Activated naive CD4-positive, alpha-beta T cell treated with anti-CD3 and anti-CD28 coated beads for 36 hours (primary cell): ENCODE measurements at regions of chr18 and their contacts with region 1.

Region 1: DNA sequence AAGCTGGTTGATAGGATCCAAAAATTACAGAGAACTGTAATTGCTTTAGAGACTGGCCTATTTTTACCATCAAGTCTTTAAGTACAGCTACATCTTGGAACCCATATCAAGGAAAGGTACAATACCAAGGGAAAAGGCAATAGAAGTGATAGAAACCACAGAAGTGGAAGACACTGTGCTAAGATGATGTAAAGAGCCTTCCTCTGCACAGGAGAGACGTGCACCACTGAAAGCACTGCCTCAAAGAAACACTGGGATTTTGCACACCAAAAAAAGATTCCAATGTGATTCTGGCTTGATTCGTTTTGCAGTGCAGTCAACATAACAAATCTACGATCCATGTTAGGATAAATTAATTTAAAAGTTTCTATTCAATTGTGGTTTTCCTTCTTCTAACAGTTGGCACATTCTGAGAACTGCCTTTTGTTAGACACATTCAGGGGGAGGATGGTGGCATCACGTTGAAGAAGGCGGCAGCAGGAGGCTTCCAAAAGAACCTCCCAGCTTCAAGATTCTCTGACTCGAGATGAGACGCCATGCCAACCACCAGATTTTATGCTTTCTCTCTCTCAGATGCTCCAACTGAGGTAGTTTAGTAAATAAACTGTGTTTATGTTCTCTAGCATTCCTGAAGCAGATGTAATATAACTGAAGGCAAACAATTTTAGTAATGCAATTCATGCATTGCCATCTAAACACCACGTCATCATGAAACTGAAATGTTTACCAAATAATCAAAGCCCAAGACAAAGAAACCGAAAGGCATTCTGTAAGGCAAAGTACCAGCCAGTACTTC is 102.9 kb downstream of the BCL2 start:
- DNase-seq: peak; percentile 48
- H3K4me3 Mint-ChIP-seq: peak overlapping the region; percentile 64
- H3K27ac Mint-ChIP-seq: peak overlapping the region; percentile 94
- H3K4me1 Mint-ChIP-seq: peaks cover 89% of the 10 kb centered on the region
- H3K27me3 Mint-ChIP-seq: no peaks in the 10 kb centered on the region

Region 2: GRCh38 chr18:63040788-63041410 is 175.8 kb before region 1 on chr18:
- CTCF ChIA-PET with region 1: no interaction called
- intact Hi-C with region 1: loop called (anchors 5 kb)
- DNase-seq: peak; percentile 53
- H3K4me3 Mint-ChIP-seq: peak overlapping the region; percentile 1
- H3K27ac Mint-ChIP-seq: peak overlapping the region; percentile 51
- H3K4me1 Mint-ChIP-seq: peaks cover 25% of the 10 kb centered on the region
- H3K27me3 Mint-ChIP-seq: no peaks in the 10 kb centered on the region

Region 3: DNA sequence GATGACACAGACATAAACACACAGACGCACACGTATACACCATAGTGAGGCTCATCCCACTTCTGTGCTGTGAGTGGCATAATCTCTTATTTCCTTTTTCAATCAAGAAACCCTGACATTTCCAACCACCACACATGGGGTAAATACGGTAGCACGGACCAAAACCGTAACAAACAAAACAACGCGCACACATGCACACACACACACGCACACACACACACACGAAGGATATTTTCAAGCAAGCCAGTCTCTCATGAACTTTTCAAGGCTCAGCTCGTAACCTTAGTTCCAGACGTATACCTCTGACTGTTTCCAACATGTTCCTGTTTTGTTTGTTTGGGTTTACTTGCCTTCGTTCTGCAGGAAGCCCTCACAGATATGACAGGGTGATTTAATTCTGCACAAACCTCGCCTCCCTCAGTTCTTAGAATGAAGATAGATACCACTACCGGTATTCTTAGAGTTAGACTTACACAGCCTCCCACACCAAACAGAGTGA is 16.9 kb before region 1 on chr18:
- CTCF ChIA-PET with region 1: interaction called, 3 read pairs
- intact Hi-C with region 1: loop called (anchors 1 kb)
- DNase-seq: peak; percentile 54
- H3K4me3 Mint-ChIP-seq: no peak overlapping the region
- H3K27ac Mint-ChIP-seq: no peak overlapping the region
- H3K4me1 Mint-ChIP-seq: peaks cover 30% of the 10 kb centered on the region
- H3K27me3 Mint-ChIP-seq: no peaks in the 10 kb centered on the region

Region 4: GRCh38 chr18:63299837-63300745 is 83.4 kb after region 1 on chr18:
- CTCF ChIA-PET with region 1: no interaction called
- intact Hi-C with region 1: loop called (anchors 1 kb)
- DNase-seq: peak; percentile 72
- H3K4me3 Mint-ChIP-seq: peak overlapping the region; percentile 17
- H3K27ac Mint-ChIP-seq: peak overlapping the region; percentile 86
- H3K4me1 Mint-ChIP-seq: peaks cover 73% of the 10 kb centered on the region
- H3K27me3 Mint-ChIP-seq: no peaks in the 10 kb centered on the region

Region 5: DNA sequence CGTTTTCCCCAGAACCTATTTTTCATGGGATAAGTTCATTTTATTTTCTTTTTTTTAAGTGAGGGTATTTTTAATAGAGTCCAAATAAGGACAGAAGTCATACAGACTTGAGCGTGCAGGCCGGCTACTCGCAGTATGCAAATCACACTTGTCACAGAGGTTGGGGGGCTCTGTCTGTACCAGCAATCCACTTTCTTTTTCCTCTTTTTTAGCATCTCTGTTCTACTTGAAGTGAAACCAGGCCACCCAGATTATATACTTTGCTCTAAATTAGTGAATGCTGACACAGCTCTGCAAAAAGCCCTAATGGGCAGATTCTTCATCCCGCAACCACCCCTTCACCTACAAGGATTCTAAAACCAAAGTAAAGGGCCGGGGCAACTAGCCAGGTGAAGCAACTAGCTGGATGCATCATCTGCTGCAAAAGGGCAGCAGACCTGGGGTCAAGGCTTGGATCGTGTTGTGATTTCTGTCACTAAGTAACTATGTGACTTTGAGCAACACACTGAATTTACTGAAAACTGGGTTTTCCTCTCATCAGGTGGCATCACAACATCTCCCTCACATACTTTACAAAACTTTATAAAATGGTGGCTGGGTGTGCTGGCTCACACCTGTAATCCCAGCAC is 131.9 kb after region 1 on chr18:
- CTCF ChIA-PET with region 1: no interaction called
- intact Hi-C with region 1: no loop called
- DNase-seq: no peak
- H3K4me3 Mint-ChIP-seq: no peak overlapping the region
- H3K27ac Mint-ChIP-seq: no peak overlapping the region
- H3K4me1 Mint-ChIP-seq: no peaks in the 10 kb centered on the region
- H3K27me3 Mint-ChIP-seq: no peaks in the 10 kb centered on the region

Region 6: DNA sequence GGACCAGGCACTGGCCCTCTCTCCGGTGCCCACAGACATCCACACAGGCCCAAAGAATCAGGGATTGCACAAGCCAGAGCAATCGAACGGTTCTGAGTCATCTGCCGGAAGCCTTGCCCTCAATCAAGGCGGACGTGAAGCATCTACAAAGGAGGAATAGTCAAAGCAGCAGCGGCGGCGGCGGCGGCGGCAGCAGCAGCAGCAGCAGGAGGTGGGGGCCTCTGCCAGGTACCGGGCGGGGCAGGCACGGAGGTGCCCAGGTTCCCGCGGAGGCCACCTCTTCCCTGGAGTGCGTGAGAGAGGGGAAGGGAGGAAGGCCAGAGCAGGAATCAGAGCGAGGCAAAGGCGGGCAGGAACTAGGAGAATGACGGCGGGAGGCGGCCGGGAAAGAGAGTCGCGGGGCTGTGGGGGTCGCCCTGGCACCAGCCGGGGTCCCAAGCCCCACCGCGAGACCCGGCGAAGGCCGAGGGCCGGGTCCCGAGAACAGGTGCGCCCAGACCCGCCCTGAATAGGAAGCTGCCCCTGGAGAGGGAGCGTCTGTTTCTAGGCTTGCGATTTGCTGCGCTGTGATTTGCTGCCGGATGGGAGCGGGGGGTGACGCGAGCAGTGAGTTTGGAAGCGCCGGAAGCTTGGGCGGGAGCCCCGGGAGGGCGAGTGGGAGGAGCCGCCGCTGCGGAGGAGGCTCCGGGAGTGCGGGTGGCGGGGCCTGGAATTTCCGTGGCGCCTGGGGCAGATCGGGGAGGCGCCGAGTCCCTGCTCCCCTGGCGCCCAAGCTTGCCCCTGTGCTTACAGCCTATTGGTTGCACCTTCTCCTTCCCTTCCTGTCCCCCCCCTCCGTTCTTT is 753.5 kb after region 1 on chr18 and contains the start of gene SERPINB8:
- CTCF ChIA-PET with region 1: no interaction called
- intact Hi-C with region 1: loop called (anchors 5 kb)
- DNase-seq: peak; percentile 91
- H3K4me3 Mint-ChIP-seq: peak within 1 kb of the TSS; percentile 93
- H3K27ac Mint-ChIP-seq: peak within 1 kb of the TSS; percentile 97
- H3K4me1 Mint-ChIP-seq: peaks cover 35% of the 10 kb centered on the region
- H3K27me3 Mint-ChIP-seq: no peaks in the 10 kb centered on the region
- total RNA-seq, gene SERPINB8: 10.5 to 11.7 TPM